ENCODE measurements at regions of chr17 and their contacts with region 1.

Region 1: GRCh38 chr17:63611354-63611753 is 10.7 kb downstream of the TACO1 start:
- DNase-seq: no peak
- H3K4me3 ChIP-seq: no peak overlapping the region
- H3K27ac ChIP-seq: no peak overlapping the region
- H3K4me1 ChIP-seq: no peaks in the 10 kb centered on the region
- H3K27me3 ChIP-seq: no peaks in the 10 kb centered on the region
- CTCF ChIP-seq: no peak
- EP300 ChIP-seq: no peak
- POLR2A ChIP-seq: no peak
- RAD21 ChIP-seq: no peak

Region 2: GRCh38 chr17:63434876-63435684 is 176.3 kb before region 1 on chr17:
- CTCF ChIA-PET with region 1: interaction called, 50 read pairs
- POLR2A ChIA-PET with region 1: interaction called, 3 read pairs
- DNase-seq: no peak
- H3K4me3 ChIP-seq: no peak overlapping the region
- H3K27ac ChIP-seq: no peak overlapping the region
- H3K4me1 ChIP-seq: peaks cover 0 to 18% (median 6%) of the 10 kb centered on the region in 4 experiments; a peak in 5 of 7 replicates
- H3K27me3 ChIP-seq: no peaks in the 10 kb centered on the region
- CTCF ChIP-seq: peak; percentile 37 to 68 (median 66); a peak in 3 of 4 replicates
- EP300 ChIP-seq: no peak
- POLR2A ChIP-seq: no peak
- RAD21 ChIP-seq: peak; percentile 32 to 49

Region 3: GRCh38 chr17:63478791-63479494 is 132.4 kb before region 1 on chr17:
- CTCF ChIA-PET with region 1: interaction called, 14 read pairs
- POLR2A ChIA-PET with region 1: no interaction called
- DNase-seq: peak; percentile 65 to 91
- H3K4me3 ChIP-seq: no peak overlapping the region
- H3K27ac ChIP-seq: no peak overlapping the region
- H3K4me1 ChIP-seq: peaks cover 0 to 22% (median 17%) of the 10 kb centered on the region in 4 experiments; a peak in 6 of 7 replicates
- H3K27me3 ChIP-seq: peaks cover 0 to 27% (median 18%) of the 10 kb centered on the region in 4 experiments; a peak in 5 of 7 replicates
- CTCF ChIP-seq: peak; percentile 96 to 99 (median 98)
- EP300 ChIP-seq: no peak
- POLR2A ChIP-seq: no peak
- RAD21 ChIP-seq: peak; percentile 79 to 88

Region 4: DNA sequence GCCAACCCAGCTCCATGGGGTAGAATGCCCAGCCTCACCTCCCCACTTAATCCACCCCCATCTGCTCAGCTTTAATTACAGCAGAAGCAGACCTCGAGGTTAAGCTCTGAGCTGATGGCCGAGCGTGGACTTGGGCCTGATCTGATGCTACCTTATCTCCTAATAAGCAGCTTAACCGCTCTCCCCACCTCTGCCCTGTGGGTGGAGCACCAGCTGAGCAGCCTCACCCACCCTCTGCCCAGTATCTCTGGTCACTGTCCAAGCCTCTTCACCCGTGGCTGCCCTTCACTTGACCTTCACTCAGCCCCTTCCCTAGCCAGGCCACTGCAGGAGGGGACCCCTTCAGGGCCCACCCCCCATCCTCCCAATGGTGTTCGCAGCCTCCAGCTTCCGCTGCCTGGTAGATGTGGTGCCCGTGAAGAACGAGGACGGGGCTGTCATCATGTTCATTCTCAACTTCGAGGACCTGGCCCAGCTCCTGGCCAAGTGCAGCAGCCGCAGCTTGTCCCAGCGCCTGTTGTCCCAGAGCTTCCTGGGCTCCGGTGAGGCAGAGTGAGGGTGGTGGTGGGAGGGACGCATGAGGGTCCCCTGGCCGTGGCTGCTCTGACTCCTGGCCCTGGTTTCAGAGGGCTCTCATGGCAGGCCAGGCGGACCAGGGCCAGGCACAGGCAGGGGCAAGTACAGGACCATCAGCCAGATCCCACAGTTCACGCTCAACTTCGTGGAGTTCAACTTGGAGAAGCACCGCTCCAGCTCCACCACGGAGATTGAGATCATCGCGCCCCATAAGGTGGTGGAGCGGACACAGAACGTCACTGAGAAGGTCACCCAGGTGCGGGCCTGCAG is 81.4 kb before region 1 on chr17:
- CTCF ChIA-PET with region 1: interaction called, 10 read pairs
- POLR2A ChIA-PET with region 1: no interaction called
- DNase-seq: no peak
- H3K4me3 ChIP-seq: no peak overlapping the region
- H3K27ac ChIP-seq: no peak overlapping the region
- H3K4me1 ChIP-seq: peaks cover 0 to 4% (median 1%) of the 10 kb centered on the region in 4 experiments; a peak in 3 of 7 replicates
- H3K27me3 ChIP-seq: no peaks in the 10 kb centered on the region
- CTCF ChIP-seq: no peak
- EP300 ChIP-seq: no peak
- POLR2A ChIP-seq: no peak
- RAD21 ChIP-seq: no peak

Region 5: GRCh38 chr17:63592797-63593472 is 18.4 kb before region 1 on chr17:
- CTCF ChIA-PET with region 1: interaction called, 10 read pairs
- POLR2A ChIA-PET with region 1: interaction called, 6 read pairs
- DNase-seq: no peak
- H3K4me3 ChIP-seq: no peak overlapping the region
- H3K27ac ChIP-seq: no peak overlapping the region
- H3K4me1 ChIP-seq: no peaks in the 10 kb centered on the region
- H3K27me3 ChIP-seq: no peaks in the 10 kb centered on the region
- CTCF ChIP-seq: no peak
- EP300 ChIP-seq: no peak
- POLR2A ChIP-seq: no peak
- RAD21 ChIP-seq: no peak

Region 6: GRCh38 chr17:63621766-63622519 is 10.6 kb after region 1 on chr17 and contains the start of gene MAP3K3:
- CTCF ChIA-PET with region 1: interaction called, 22 read pairs
- POLR2A ChIA-PET with region 1: interaction called, 10 read pairs
- DNase-seq: peak; percentile 97 to 99
- H3K4me3 ChIP-seq: peak within 1 kb of the TSS; percentile 64 to 82 (median 72)
- H3K27ac ChIP-seq: peak within 1 kb of the TSS; percentile 41; the same call in 1 of the 2 replicates
- H3K4me1 ChIP-seq: peaks cover 2 to 5% (median 3%) of the 10 kb centered on the region in 4 experiments; a peak in 3 of 7 replicates
- H3K27me3 ChIP-seq: no peaks in the 10 kb centered on the region
- CTCF ChIP-seq: no peak
- EP300 ChIP-seq: no peak
- POLR2A ChIP-seq: peak; percentile 58 to 95
- RAD21 ChIP-seq: peak; percentile 0 to 2; a peak in 2 of 4 replicates
- total RNA-seq, gene MAP3K3: 21.0 and 22.6 TPM in 2 replicates

Region 7: GRCh38 chr17:63675607-63676413 is 64.5 kb after region 1 on chr17:
- CTCF ChIA-PET with region 1: interaction called, 26 read pairs
- POLR2A ChIA-PET with region 1: no interaction called
- DNase-seq: no peak
- H3K4me3 ChIP-seq: no peak overlapping the region
- H3K27ac ChIP-seq: no peak overlapping the region
- H3K4me1 ChIP-seq: peaks cover 3 to 13% (median 6%) of the 10 kb centered on the region in 4 experiments; a peak in 6 of 7 replicates
- H3K27me3 ChIP-seq: no peaks in the 10 kb centered on the region
- CTCF ChIP-seq: no peak
- EP300 ChIP-seq: no peak
- POLR2A ChIP-seq: no peak
- RAD21 ChIP-seq: no peak

Measured in H1 (cell line).